ENCODE measurements at regions of chr17 and their contacts with region 1.

Region 1: DNA sequence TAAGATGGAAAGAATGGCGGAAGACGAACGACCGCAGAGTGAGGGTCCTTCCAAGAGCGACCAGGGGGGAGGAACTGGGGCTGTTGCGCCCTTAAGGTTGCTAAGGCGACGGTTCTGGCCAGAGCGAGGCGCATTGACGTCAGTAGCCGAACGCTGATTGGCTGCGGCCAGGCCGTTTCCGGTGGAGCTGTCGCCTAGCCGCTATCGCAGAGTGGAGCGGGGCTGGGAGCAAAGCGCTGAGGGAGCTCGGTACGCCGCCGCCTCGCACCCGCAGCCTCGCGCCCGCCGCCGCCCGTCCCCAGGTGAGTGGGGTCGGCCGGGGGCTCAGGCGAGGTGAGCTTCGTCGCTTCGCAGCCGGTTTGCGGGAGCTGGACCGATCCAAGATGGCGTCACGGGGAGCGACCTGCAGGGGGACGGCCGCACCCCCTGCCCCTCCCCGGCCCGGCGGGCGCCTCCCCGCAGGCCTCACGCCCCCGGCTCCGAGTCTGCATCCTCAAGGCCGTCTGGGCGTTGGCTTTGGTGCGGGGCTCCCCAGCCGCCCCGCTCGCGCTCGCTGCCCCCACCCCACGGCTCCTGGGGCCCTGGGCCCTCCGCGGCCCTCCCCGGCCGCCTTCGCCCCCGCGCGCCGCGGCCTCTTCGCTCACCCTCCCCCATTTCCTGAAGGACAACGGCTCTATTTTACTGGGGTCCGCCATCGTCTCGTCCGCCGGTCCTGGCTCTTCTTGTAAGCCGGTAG is at the start of gene PRKAR1A:
- DNase-seq: peak; percentile 88 to 98 (median 94)
- ATAC-seq: peak; percentile 79
- H3K4me3 ChIP-seq: peak within 1 kb of the TSS; percentile 85 to 87
- H3K4me3 Mint-ChIP-seq: peak within 1 kb of the TSS; percentile 100
- H3K27ac ChIP-seq: peak within 1 kb of the TSS; percentile 99
- H3K27ac Mint-ChIP-seq: peak within 1 kb of the TSS; percentile 100
- H3K4me1 ChIP-seq: peaks cover 22% of the 10 kb centered on the region
- H3K4me1 Mint-ChIP-seq: peaks cover 54% of the 10 kb centered on the region
- H3K27me3 ChIP-seq: no peaks in the 10 kb centered on the region
- H3K27me3 Mint-ChIP-seq: no peaks in the 10 kb centered on the region
- CTCF ChIP-seq: no peak
- total RNA-seq, gene PRKAR1A: 61.2 to 63.5 TPM

Region 2: DNA sequence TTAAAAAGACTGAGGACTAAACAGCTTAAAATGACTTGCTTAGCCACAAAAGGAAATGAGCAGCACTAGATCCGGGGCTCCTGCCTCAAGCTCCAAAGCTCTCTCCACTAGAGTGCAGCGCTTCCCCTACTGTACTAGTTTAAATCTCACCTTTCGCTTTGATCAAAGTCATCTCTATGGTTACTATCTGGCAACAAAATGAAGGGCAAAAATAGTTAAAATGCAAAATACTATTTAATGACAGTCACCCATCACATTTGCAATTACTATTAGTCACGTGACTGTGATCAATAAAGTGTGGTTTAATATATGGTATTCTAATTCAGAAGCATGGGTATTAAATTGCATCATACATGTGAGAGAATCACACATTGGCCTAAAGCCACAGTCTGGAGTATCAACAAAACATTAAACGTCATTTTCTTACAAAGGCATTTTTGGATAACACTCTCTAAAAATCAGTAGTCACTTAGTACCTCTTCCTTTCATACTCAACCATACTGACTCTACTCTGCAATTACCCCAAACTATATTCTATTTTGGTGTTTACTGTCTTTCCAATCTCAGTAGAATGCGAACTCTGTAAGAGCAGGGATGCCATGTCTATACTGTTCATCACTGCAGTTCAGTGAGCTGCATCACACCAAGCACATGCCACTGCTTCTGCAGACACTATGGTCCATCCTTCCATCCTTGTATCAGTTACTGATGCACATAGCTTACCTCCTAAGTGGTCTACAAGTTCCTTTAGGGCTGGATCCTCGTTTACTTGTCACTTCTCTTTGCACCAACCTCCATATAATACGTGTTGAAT is 1152.2 kb before region 1 on chr17:
- CTCF ChIA-PET with region 1: no interaction called
- POLR2A ChIA-PET with region 1: no interaction called
- intact Hi-C with region 1: loop called in 1 of 2 experiments (anchors 5 kb)
- DNase-seq: peak in 6 of 9 experiments; percentile 26 to 81 (median 62)
- ATAC-seq: peak; percentile 95
- H3K4me3 ChIP-seq: no peak overlapping the region
- H3K4me3 Mint-ChIP-seq: peak overlapping the region; percentile 0
- H3K27ac ChIP-seq: peak overlapping the region; percentile 42 to 46
- H3K27ac Mint-ChIP-seq: peak overlapping the region; percentile 83
- H3K4me1 ChIP-seq: peaks cover 61% of the 10 kb centered on the region
- H3K4me1 Mint-ChIP-seq: peaks cover 65% of the 10 kb centered on the region
- H3K27me3 ChIP-seq: no peaks in the 10 kb centered on the region
- H3K27me3 Mint-ChIP-seq: no peaks in the 10 kb centered on the region
- CTCF ChIP-seq: peak; percentile 63

Region 3: DNA sequence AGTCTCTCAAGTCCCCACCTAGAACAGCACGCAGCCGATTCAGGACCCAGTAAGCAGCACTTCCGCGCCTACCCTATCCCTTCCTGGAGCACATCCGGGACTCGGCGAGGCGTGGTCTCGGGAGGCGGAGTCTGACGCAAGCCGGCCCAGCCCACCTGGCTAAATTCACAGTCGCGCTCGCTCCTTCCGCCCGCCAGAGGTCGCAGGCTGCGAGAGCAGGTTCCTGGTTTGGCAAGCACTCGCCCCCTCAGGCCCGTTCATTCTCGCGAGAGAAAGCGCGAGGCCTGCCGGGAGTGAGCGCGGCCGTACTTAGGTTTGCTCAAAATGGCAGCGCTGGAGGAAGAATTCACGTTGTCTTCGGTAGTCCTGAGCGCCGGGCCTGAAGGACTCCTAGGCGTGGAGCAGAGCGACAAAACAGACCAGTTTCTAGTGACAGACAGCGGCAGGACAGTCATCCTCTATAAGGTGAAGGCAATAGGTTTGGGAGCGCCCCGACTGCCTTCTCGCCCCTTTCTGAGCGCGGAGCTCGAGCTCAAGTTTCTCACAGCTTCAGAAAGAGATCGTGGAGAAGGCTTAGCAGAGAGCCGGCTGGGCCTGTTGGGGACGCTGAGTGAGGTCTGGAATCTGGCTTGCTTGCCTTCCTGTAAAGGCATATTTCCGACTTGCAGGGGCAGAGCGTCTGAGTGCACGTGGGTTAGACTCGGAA is 794.6 kb before region 1 on chr17 and contains the start of gene NOL11:
- CTCF ChIA-PET with region 1: no interaction called
- POLR2A ChIA-PET with region 1: no interaction called
- intact Hi-C with region 1: loop called in 1 of 2 experiments (anchors 2 kb)
- DNase-seq: peak; percentile 99 to 100 (median 99)
- ATAC-seq: peak; percentile 94
- H3K4me3 ChIP-seq: peak within 1 kb of the TSS; percentile 93 to 98
- H3K4me3 Mint-ChIP-seq: peak within 1 kb of the TSS; percentile 99
- H3K27ac ChIP-seq: peak within 1 kb of the TSS; percentile 90 to 96
- H3K27ac Mint-ChIP-seq: peak within 1 kb of the TSS; percentile 99
- H3K4me1 ChIP-seq: peaks cover 20% of the 10 kb centered on the region
- H3K4me1 Mint-ChIP-seq: peaks cover 32% of the 10 kb centered on the region
- H3K27me3 ChIP-seq: no peaks in the 10 kb centered on the region
- H3K27me3 Mint-ChIP-seq: peaks cover 5% of the 10 kb centered on the region
- CTCF ChIP-seq: peak; percentile 72
- total RNA-seq, gene NOL11: 91.0 to 94.0 TPM

Region 4: DNA sequence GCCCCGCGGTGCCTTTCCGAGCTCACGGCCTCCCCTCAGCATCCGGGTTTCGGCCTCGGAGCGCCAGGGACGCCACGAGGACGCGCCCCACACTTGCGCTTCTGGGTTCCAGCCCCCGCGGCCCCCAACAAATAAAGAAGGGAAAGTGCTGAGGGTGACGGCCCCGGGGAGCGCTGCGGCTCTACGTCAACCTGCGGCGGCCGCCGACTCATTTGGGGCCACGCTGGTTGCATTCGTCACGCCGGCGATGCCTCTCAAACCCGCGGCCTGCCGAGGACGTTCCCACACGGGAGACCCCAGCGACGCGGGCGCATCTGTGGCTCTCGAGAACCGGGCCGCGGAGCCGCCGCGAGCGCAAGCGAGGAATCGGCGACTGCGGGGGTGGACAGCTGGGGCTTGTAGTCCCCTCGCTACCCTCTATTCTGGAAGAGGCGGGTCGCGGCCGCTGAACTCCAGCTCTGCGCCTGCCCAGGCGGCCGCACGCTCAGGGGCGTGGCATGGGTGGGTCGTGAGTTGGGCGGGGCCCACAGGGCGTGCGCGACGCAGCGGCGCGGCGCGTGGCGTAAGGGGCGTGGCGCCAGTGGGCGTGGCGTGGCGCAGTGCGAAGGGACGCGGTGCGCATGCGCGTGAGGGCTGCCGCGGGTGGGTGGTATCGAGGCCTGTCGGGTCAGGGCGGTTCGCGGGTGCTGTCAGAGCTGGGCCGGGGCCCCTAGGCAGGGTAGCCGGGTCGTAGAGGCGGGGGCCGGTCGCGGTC is 264.8 kb before region 1 on chr17 and contains the start of gene AMZ2:
- CTCF ChIA-PET with region 1: no interaction called
- POLR2A ChIA-PET with region 1: no interaction called
- intact Hi-C with region 1: loop called (anchors 1 to 5 kb)
- DNase-seq: peak; percentile 94 to 99 (median 98)
- ATAC-seq: peak; percentile 91
- H3K4me3 ChIP-seq: peak within 1 kb of the TSS; percentile 70 to 94
- H3K4me3 Mint-ChIP-seq: peak within 1 kb of the TSS; percentile 96
- H3K27ac ChIP-seq: peak within 1 kb of the TSS; percentile 93 to 96
- H3K27ac Mint-ChIP-seq: peak within 1 kb of the TSS; percentile 98
- H3K4me1 ChIP-seq: peaks cover 34% of the 10 kb centered on the region
- H3K4me1 Mint-ChIP-seq: peaks cover 42% of the 10 kb centered on the region
- H3K27me3 ChIP-seq: no peaks in the 10 kb centered on the region
- H3K27me3 Mint-ChIP-seq: no peaks in the 10 kb centered on the region
- CTCF ChIP-seq: no peak
- total RNA-seq, gene AMZ2: 61.0 to 71.1 TPM

Region 5: GRCh38 chr17:68560966-68561720 is 48.7 kb after region 1 on chr17:
- CTCF ChIA-PET with region 1: no interaction called
- POLR2A ChIA-PET with region 1: no interaction called
- intact Hi-C with region 1: no loop called
- DNase-seq: no peak
- ATAC-seq: no peak
- H3K4me3 ChIP-seq: no peak overlapping the region
- H3K4me3 Mint-ChIP-seq: no peak overlapping the region
- H3K27ac ChIP-seq: no peak overlapping the region
- H3K27ac Mint-ChIP-seq: no peak overlapping the region
- H3K4me1 ChIP-seq: no peaks in the 10 kb centered on the region
- H3K4me1 Mint-ChIP-seq: no peaks in the 10 kb centered on the region
- H3K27me3 ChIP-seq: no peaks in the 10 kb centered on the region
- H3K27me3 Mint-ChIP-seq: peaks cover 3% of the 10 kb centered on the region
- CTCF ChIP-seq: no peak

Region 6: DNA sequence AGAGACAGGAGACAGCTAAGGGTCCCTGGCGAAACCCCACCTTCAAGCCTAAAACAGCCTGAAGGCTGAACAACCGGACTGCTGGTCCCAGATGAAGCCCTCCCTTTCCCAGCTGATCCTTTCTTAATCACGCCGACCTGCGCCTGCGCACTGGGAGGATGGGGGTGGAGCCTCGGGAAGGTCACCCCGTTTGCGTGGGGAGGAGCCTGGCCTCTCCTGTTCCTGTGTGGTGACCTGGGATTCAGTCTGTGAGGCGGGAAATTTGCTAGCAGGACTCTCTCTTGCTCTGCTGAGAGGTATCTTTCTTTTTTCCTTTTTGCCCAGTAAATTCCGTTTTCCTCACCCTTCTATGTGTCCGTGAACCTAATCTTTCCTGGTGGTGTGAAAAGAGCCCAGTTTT is 79.2 kb after region 1 on chr17:
- CTCF ChIA-PET with region 1: no interaction called
- POLR2A ChIA-PET with region 1: no interaction called
- intact Hi-C with region 1: no loop called
- DNase-seq: no peak
- ATAC-seq: no peak
- H3K4me3 ChIP-seq: no peak overlapping the region
- H3K4me3 Mint-ChIP-seq: no peak overlapping the region
- H3K27ac ChIP-seq: no peak overlapping the region
- H3K27ac Mint-ChIP-seq: no peak overlapping the region
- H3K4me1 ChIP-seq: peaks cover 8% of the 10 kb centered on the region
- H3K4me1 Mint-ChIP-seq: peaks cover 16% of the 10 kb centered on the region
- H3K27me3 ChIP-seq: peaks cover 0 to 11% of the 10 kb centered on the region in 2 experiments
- H3K27me3 Mint-ChIP-seq: peaks cover 30% of the 10 kb centered on the region
- CTCF ChIP-seq: no peak

Region 7: GRCh38 chr17:69327060-69327831 is 814.8 kb after region 1 on chr17 and contains the start of gene ABCA5:
- CTCF ChIA-PET with region 1: no interaction called
- POLR2A ChIA-PET with region 1: no interaction called
- intact Hi-C with region 1: loop called (anchors 5 to 10 kb)
- DNase-seq: peak; percentile 72 to 98 (median 87)
- ATAC-seq: peak; percentile 96
- H3K4me3 ChIP-seq: peak within 1 kb of the TSS; percentile 79 to 94
- H3K4me3 Mint-ChIP-seq: peak within 1 kb of the TSS; percentile 96
- H3K27ac ChIP-seq: peak within 1 kb of the TSS; percentile 85 to 92
- H3K27ac Mint-ChIP-seq: peak within 1 kb of the TSS; percentile 97
- H3K4me1 ChIP-seq: peaks cover 17% of the 10 kb centered on the region
- H3K4me1 Mint-ChIP-seq: peaks cover 30% of the 10 kb centered on the region
- H3K27me3 ChIP-seq: peaks cover 0 to 3% of the 10 kb centered on the region in 2 experiments
- H3K27me3 Mint-ChIP-seq: peaks cover 7% of the 10 kb centered on the region
- CTCF ChIP-seq: no peak
- total RNA-seq, gene ABCA5: 21.8 to 22.4 TPM

Measured in CD8-positive, alpha-beta T cell (primary cell).